Gastrocnemius medialis (tissue), 4 donors: ENCODE measurements at regions of chr12 and their contacts with region 1.

Region 1: GRCh38 chr12:89695100-89695499 is 13.5 kb downstream of the ATP2B1 start:
- DNase-seq: peak; percentile 38 to 46
- ATAC-seq: peak; percentile 100
- H3K4me3 ChIP-seq: peak overlapping the region in 3 of 4 donors; percentile 26 to 30 (median 30)
- H3K27ac ChIP-seq: peak overlapping the region; percentile 50 to 83 (median 75)
- H3K4me1 ChIP-seq: peaks cover 24 to 58% of the 10 kb centered on the region in 2 donors
- H3K27me3 ChIP-seq: no peaks in the 10 kb centered on the region
- CTCF ChIP-seq: no peak
- POLR2A ChIP-seq: peak; percentile 42 to 73

Region 2: DNA sequence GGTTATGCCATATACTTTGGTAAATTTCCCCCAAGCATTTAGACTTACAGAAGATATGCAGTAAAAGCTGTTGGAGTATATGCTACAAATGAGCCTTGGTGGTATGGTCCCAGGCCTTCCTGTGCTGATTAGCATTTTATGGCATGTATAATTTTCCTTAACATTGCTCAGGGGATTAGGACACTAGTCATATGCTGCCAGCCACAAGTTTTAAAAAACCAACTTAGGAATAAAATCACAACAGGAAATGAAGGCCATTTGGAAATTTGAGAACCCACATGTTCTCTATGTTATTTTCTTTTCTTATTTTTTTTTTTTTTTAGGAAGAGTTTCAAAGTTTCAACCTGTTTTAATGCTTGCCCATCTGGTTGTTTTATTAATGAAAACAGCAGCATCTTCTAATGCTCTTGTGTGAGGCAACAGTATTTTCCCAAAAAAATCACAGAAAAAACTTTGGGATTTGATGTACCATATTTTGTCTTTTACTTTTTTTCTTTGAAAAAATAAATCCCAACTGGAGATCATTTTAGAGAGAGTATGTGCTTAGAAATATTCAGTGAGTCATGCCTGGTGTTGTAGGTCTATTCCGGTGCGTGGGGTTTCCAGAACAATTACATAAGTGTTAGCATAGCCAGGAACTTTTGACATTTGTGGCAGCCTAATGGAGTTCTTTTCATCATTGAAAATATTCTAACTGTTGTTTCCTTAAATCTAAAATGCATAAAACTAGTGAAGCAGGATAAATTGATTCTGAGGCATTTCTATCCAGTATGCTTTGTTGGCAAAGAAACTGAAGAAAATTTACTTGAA is 321.1 kb before region 1 on chr12:
- in situ Hi-C with region 1: no loop called
- intact Hi-C with region 1: no loop called
- DNase-seq: peak in 1 of 2 donors; percentile 15
- ATAC-seq: peak in 1 of 2 donors; percentile 62
- H3K4me3 ChIP-seq: no peak overlapping the region
- H3K27ac ChIP-seq: no peak overlapping the region
- H3K4me1 ChIP-seq: peaks cover 4 to 17% of the 10 kb centered on the region in 2 donors
- H3K27me3 ChIP-seq: no peaks in the 10 kb centered on the region
- CTCF ChIP-seq: no peak
- POLR2A ChIP-seq: no peak

Region 3: DNA sequence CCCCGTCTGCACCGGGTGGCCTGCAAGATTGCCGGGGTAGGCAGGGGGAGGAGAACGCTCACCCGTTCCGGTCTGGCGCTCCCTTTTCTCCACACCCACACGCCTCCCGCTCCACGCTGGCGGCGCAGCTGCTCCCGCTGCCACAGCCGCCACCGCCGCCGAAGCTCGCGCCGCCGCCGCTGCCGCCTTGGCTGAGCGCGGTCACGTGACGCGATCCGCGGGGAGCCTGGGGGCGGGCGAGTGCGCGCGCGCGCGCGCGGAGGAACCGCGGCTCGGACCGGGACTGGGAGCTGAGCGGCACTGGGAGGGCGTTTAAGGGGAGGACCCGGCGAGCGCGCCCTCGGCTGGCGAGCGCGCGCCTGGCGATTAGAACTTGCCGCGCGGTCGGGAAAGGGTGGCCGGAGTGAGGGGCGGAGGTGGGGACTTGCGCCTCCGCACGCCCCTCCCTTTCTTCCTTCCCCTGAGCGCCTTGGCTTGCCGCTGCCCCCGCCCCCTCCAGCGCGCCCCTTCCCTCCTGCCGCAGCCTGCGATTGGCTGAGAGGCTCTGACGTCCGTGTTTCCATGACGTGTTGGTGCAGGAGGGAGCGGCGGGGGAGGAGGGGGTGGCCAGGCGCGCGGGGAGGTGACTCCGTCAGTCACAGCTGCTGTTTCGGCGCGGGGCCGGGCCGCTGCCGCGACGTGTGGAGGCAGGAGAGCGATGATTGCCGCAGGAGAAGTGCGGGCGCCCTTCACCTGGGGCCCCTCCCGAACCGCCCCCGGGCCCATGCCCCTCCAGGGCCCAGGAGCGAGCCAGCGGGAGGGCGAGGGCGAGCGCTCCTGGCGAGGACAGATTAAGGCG is 14.3 kb after region 1 on chr12:
- in situ Hi-C with region 1: no loop called
- intact Hi-C with region 1: loop called (anchors 1 kb)
- DNase-seq: peak; percentile 98 to 99
- ATAC-seq: peak; percentile 82 to 84
- H3K4me3 ChIP-seq: peak overlapping the region; percentile 76 to 96 (median 92)
- H3K27ac ChIP-seq: peak overlapping the region; percentile 97 to 99 (median 98)
- H3K4me1 ChIP-seq: peaks cover 18 to 34% of the 10 kb centered on the region in 2 donors
- H3K27me3 ChIP-seq: no peaks in the 10 kb centered on the region
- CTCF ChIP-seq: peak in 2 of 5 experiments; percentile 42 to 59
- POLR2A ChIP-seq: peak; percentile 97 to 98